ENCODE measurements at regions of chr17 and their contacts with region 1.

Region 1: GRCh38 chr17:79839363-79840268 is at the start of gene CBX4:
- DNase-seq: peak; percentile 21
- H3K4me3 ChIP-seq: peak within 1 kb of the TSS; percentile 74
- CTCF ChIP-seq: peak; percentile 75

Region 2: GRCh38 chr17:79796763-79797491 is 42.7 kb before region 1 on chr17 and contains the start of gene CBX8:
- CTCF ChIA-PET with region 1: interaction called, 10 read pairs
- POLR2A ChIA-PET with region 1: interaction called, 8 read pairs
- DNase-seq: peak; percentile 89
- H3K4me3 ChIP-seq: peak within 1 kb of the TSS; percentile 82
- CTCF ChIP-seq: peak; percentile 25

Region 3: DNA sequence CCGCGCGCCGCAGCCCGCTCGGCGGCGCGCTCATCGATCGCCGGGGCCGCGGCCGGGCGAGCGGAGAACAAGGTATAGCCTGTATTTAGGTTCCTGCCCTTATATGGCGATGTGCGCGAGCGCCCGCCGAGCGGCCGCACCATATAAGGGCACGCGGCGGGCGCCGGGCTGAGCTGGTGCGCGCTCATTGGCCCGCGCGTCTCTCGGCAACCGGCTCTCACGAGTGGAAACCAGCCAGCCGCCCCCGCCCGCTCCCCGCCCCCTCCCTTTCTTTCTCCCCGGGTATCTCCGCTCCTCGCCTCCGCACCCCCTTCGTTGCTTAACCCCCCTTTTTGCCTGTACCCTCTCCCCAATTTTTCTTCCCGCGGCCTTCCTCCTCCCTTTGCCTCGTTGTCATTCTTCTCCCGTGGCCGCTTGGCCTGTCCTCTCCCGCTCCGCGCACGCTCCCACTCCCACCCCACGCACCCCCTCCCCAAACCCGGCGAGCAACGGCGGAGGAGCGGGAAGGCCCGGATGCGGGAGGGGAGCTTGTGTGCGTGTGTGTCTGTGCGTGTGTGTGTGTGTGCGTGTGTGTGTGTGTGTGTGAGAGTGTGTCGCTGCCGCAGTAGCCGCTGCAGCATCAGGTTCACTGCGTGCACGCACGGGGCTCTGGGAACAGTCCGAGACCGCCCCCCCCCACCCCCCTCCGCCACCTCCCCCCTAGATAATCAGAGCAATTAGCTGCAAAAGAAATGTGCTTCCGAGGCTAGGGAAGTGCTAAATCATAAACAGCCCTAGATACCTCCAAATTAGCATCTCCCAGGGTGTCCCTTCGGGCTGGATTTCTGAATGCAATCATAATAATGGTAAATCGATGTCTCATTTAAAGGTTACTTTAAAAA is 29.2 kb before region 1 on chr17:
- CTCF ChIA-PET with region 1: interaction called, 19 read pairs
- POLR2A ChIA-PET with region 1: interaction called, 6 read pairs
- DNase-seq: no peak
- H3K4me3 ChIP-seq: peak overlapping the region; percentile 39
- CTCF ChIP-seq: no peak

Region 4: DNA sequence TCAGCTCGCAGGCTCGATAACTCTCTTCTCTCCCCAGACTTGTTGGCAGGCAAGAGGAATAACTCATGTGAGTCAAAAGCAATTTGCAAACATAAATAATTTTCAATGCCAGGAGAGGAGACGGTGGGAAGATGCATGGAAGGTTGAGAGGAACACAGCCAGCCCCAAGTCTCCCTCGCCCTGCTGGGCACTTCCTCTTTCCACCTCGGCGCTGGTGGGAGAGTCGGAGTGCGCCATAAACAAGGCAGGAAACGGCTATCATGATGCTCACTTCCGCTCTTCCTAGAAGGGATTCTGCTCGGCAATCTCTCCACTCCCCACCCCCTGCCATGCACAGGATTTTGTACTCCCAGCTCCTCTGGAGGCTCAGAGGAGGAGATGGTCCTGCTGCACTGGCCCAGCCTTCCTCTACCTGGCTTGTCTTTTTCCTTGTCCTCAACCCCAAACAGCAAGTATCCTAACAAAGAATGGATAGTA is 13.4 kb before region 1 on chr17:
- CTCF ChIA-PET with region 1: interaction called, 19 read pairs
- POLR2A ChIA-PET with region 1: interaction called, 4 read pairs
- DNase-seq: no peak
- H3K4me3 ChIP-seq: no peak overlapping the region
- CTCF ChIP-seq: no peak

Region 5: DNA sequence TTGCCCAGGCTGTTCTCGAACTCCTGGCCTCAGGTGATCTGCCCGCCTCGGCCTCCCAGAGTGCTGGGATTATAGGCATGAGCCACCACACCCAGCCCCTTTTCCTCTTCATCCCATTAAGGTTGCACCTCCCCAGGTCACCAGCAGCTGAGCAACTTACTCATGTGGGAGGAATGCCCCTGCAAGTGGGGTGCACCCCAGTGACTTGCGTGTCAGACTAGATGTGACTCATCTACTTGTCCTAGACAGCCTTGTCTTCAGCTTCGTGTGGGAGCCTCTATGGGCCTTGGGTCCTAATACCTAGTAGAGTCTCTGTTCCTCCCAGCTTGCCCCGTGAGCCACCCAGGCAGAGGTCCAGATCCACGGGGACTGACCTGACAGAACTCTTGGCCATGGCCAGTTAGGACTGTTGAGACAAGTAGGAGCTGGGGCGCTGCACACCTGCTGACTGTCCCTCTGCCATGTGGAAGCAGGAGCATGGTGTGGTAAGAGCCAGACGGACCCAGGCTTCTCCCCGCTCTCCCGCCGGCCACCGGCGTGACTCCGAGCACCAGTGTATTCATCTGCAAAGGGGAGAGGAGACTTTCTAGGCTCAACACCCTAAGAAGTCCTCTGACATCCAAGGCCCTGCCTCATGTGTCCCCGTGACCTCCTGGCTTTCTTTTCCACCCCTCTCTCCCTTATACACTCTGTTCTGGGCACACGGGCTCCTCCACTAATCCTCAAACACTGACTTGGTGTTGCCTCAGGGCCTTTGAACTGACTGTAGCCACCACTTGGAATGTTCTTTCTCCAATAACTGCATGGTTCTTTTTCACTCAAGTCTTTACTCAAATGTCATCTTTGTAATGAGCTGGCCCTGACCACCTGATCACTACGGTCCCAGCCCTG is 11.2 kb after region 1 on chr17:
- CTCF ChIA-PET with region 1: interaction called, 39 read pairs
- POLR2A ChIA-PET with region 1: interaction called, 17 read pairs
- DNase-seq: peak; percentile 61
- H3K4me3 ChIP-seq: no peak overlapping the region
- CTCF ChIP-seq: no peak

Region 6: DNA sequence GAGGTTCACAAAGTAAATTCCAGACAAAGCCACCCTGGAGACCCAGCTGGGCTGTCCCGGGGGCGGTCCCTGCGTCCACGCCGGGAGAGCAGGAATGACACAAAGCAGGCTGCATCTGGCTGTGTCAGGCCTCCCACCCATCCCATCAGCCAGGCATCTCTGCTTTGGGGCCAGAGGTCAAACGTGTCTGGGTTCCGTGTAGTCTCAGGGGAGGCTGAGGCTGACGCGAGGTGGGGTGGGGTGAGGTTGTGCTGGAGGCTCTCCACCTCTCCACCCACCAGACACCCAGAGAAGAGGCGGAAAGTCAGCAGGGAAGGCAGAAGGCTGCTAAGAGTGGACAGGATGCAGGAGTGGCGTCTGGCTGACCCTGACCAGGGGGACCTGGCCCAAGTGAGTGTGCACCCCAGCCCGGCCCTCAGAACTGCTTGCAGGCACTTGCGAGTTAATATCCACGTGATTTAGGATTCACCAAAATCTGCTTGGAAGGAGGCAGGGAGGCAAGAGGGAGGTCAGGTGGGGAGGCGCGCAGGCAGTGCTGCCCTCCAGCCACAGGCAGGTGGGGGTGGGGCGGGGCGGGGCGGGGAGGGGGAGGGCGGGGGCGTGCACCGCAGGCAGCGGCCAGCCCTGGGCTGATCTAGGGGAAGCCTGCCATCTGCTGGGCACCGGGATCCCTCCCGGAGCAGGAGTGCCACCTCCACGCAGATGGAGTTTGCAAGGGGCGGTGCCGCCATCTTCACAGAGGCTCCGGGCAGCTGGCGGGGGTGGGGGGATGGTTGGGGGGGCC is 151.7 kb after region 1 on chr17:
- CTCF ChIA-PET with region 1: interaction called, 17 read pairs
- POLR2A ChIA-PET with region 1: interaction called, 10 read pairs
- DNase-seq: no peak
- H3K4me3 ChIP-seq: peak overlapping the region; percentile 42
- CTCF ChIP-seq: peak; percentile 86

Region 7: DNA sequence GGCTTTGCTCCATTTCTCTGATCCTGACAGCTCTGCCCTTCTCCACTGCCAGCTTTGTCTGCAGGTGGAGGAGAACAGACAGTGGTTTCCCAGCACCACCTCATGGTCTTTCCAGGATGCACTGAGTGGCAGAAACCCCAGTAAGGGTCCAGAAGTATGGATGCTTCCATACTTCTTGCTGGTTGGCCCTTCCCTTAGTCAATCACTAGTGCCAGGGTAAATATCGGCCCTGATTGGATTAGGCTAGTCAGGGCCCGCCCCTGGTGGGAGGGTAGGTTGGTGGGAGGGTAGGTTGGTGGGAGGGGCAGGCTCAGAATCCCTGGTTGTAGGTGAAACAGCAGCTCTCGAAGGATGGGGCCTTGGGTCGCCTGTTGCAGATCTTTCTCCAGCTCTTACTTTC is 431.2 kb after region 1 on chr17:
- CTCF ChIA-PET with region 1: no interaction called
- POLR2A ChIA-PET with region 1: no interaction called
- DNase-seq: no peak
- H3K4me3 ChIP-seq: no peak overlapping the region
- CTCF ChIP-seq: no peak